GM12878 (cell line): ENCODE measurements at regions of chr10 and their contacts with region 1.

Region 1: DNA sequence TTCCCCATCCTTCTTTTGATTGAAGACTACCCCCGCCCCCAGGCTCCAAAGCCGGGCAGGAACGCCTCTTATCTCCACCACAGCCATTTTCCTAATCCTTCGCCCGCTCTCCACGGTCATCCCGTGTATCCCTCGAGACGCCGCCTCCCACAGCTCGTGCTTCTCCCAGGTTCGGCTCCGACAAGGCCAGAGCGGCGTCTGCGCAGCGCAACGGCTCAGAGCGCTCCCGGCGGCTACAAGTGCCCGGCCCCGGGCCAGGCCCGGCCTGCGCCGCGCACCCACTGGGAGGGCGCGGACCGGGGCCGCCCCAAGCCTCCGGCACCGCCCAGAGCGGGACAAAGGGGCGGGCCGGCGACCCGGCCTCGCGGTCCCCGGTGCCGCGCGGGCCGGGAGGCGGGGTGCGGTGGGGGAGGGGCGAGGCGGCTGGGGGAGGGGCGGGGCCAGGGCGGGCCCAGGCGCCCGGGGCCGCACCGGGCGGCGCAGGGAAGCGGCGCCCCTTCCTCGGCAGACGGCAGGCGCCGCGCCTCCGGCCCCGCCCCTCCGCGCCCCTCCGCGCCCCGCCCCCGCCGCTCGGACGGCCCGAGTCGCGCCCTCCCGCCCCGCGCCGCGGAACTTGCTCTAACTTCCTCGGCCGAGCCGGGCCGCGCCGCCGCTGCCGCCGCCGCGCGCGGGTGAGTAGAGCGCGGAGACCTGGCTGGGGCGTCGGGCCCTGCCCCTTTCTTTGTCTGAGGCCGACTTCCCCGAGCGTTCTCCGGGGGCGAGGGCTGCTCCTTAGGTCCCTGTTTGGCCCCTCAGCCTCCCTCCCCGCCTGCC is at the start of gene TSPAN14:
- DNase-seq: no peak
- ATAC-seq: peak; percentile 65
- H3K4me3 ChIP-seq: peak within 1 kb of the TSS; percentile 92
- H3K27ac ChIP-seq: peak within 1 kb of the TSS; percentile 67
- H3K4me1 ChIP-seq: peaks cover 46% of the 10 kb centered on the region
- H3K27me3 ChIP-seq: no peaks in the 10 kb centered on the region
- CTCF ChIP-seq: no peak
- EP300 ChIP-seq: no peak
- POLR2A ChIP-seq: peak; percentile 74
- RAD21 ChIP-seq: no peak
- polyA plus RNA-seq, gene TSPAN14: 2.5 to 2.6 TPM

Region 2: DNA sequence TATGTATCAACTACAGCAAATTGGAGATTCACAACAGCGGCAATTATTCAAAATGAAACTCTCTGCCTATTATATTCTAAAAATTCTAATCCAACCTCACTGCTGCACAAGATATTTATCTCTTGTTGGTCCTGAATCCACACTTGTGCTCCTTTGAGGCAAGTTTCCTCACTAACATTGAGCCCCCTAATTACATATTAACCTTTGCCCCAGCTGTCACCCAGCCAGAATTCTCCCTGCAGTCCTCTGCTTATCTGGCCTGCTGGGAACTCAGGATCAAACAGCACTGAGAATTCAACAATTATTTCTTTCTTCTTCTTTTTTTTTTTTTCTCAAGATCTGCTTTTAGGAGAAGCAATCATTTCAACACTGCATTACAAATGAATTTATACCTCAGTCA is 342.9 kb before region 1 on chr10:
- CTCF ChIA-PET with region 1: no interaction called
- POLR2A ChIA-PET with region 1: no interaction called
- RAD21 ChIA-PET with region 1: no interaction called
- SMC1A ChIA-PET with region 1: no interaction called
- in situ Hi-C with region 1: no loop called
- intact Hi-C with region 1: no loop called
- DNase-seq: no peak
- ATAC-seq: no peak
- H3K4me3 ChIP-seq: no peak overlapping the region
- H3K27ac ChIP-seq: no peak overlapping the region
- H3K4me1 ChIP-seq: no peaks in the 10 kb centered on the region; the same call in 1 of the 2 replicates
- H3K27me3 ChIP-seq: no peaks in the 10 kb centered on the region
- CTCF ChIP-seq: no peak
- EP300 ChIP-seq: no peak
- POLR2A ChIP-seq: no peak
- RAD21 ChIP-seq: no peak

Region 3: DNA sequence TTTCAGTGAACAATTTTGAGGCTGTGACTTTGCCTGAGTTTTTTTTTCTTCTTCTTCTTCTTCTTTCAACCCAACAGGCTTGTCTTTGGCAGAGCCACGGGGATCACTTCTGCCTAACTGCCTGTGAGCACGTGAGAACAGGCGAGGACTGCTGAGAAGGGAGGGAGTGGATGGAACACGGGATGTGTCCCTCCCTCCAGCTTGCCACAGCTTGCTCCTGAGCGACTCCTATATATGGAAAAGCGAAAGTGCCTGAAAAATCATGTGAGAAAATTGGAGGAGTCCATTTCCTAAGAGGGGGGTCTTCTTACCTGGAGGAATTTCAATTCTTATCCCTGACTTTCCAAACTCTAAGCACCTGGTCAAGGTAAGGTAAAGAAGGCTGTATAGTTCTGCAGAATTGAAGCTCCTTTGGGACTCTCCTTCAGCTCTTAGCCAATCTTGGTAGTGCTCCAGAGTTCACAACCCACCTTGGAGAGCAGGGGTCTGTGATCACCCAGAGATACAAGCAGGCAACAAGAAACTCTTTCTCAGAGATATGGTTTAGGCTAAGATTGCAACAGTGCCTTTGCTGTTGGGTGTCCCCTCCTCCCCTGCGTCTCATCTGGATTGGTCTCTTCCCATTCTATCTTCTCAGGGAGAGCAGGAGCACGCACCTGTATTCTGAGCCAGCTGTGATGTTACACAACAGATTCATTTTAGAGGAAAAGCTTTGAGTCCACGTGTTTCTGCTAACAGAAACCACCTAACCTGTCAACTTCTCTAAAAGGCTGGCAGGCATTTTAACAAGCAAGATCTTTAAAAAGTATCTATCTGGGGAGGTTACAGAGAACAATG is 164.2 kb before region 1 on chr10 and contains the start of gene MAT1A:
- CTCF ChIA-PET with region 1: no interaction called
- POLR2A ChIA-PET with region 1: no interaction called
- RAD21 ChIA-PET with region 1: no interaction called
- SMC1A ChIA-PET with region 1: no interaction called
- in situ Hi-C with region 1: no loop called
- intact Hi-C with region 1: no loop called
- DNase-seq: no peak
- ATAC-seq: no peak
- H3K4me3 ChIP-seq: no peak within 1 kb of the TSS
- H3K27ac ChIP-seq: no peak within 1 kb of the TSS
- H3K4me1 ChIP-seq: no peaks in the 10 kb centered on the region
- H3K27me3 ChIP-seq: peaks cover 0 to 6% of the 10 kb centered on the region in 2 experiments; a peak in 1 of 4 replicates
- CTCF ChIP-seq: no peak
- EP300 ChIP-seq: no peak
- POLR2A ChIP-seq: no peak
- RAD21 ChIP-seq: no peak
- polyA plus RNA-seq, gene MAT1A: not detected

Region 4: DNA sequence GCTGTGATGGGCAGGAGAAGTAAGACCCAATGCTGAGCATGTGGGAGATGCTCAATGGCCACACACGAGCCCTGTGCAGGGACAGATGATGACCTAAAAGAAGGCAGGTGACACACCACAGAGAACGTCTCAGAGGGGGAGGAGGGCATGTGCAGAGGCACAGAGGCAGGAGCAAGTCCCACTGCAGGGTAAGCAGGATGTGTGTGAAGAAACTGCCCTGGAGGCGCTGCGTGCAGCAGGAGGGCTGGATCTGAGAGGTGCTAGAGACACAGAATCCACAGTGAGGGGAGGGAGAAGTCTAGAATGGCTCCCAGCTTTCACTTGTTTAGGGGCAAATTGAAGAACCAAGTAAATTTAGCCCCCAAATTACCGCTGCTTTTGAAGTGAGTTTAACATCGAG is 82.4 kb before region 1 on chr10:
- CTCF ChIA-PET with region 1: no interaction called
- POLR2A ChIA-PET with region 1: no interaction called
- RAD21 ChIA-PET with region 1: no interaction called
- SMC1A ChIA-PET with region 1: no interaction called
- in situ Hi-C with region 1: no loop called
- intact Hi-C with region 1: no loop called
- DNase-seq: no peak
- ATAC-seq: no peak
- H3K4me3 ChIP-seq: no peak overlapping the region
- H3K27ac ChIP-seq: no peak overlapping the region
- H3K4me1 ChIP-seq: no peaks in the 10 kb centered on the region
- H3K27me3 ChIP-seq: no peaks in the 10 kb centered on the region
- CTCF ChIP-seq: no peak
- EP300 ChIP-seq: no peak
- POLR2A ChIP-seq: no peak
- RAD21 ChIP-seq: no peak

Region 5: GRCh38 chr10:80421707-80422536 is 32.0 kb before region 1 on chr10:
- CTCF ChIA-PET with region 1: interaction called, 7 read pairs
- POLR2A ChIA-PET with region 1: no interaction called
- RAD21 ChIA-PET with region 1: interaction called, 3 read pairs
- SMC1A ChIA-PET with region 1: interaction called, 11 read pairs
- in situ Hi-C with region 1: no loop called
- intact Hi-C with region 1: no loop called
- DNase-seq: peak; percentile 40
- ATAC-seq: peak; percentile 92
- H3K4me3 ChIP-seq: peak overlapping the region; percentile 23; the same call in 1 of the 2 replicates
- H3K27ac ChIP-seq: peak overlapping the region; percentile 47
- H3K4me1 ChIP-seq: peaks cover 21% of the 10 kb centered on the region
- H3K27me3 ChIP-seq: no peaks in the 10 kb centered on the region
- CTCF ChIP-seq: no peak
- EP300 ChIP-seq: no peak
- POLR2A ChIP-seq: no peak
- RAD21 ChIP-seq: no peak

Region 6: GRCh38 chr10:80429521-80429966 is 24.4 kb before region 1 on chr10:
- CTCF ChIA-PET with region 1: no interaction called
- POLR2A ChIA-PET with region 1: interaction called, 10 read pairs
- RAD21 ChIA-PET with region 1: no interaction called
- SMC1A ChIA-PET with region 1: no interaction called
- in situ Hi-C with region 1: no loop called
- intact Hi-C with region 1: no loop called
- DNase-seq: no peak
- ATAC-seq: no peak; the same call in 2 of the 3 replicates
- H3K4me3 ChIP-seq: no peak overlapping the region
- H3K27ac ChIP-seq: no peak overlapping the region
- H3K4me1 ChIP-seq: no peaks in the 10 kb centered on the region
- H3K27me3 ChIP-seq: no peaks in the 10 kb centered on the region
- CTCF ChIP-seq: no peak
- EP300 ChIP-seq: no peak
- POLR2A ChIP-seq: no peak
- RAD21 ChIP-seq: no peak

Region 7: GRCh38 chr10:80464557-80465450 is 10.9 kb after region 1 on chr10:
- CTCF ChIA-PET with region 1: interaction called, 76 read pairs
- POLR2A ChIA-PET with region 1: interaction called, 190 read pairs
- RAD21 ChIA-PET with region 1: interaction called, 122 read pairs
- SMC1A ChIA-PET with region 1: interaction called, 192 read pairs
- in situ Hi-C with region 1: no loop called
- intact Hi-C with region 1: no loop called
- DNase-seq: no peak
- ATAC-seq: peak; percentile 38
- H3K4me3 ChIP-seq: peak overlapping the region; percentile 42; the same call in 1 of the 2 replicates
- H3K27ac ChIP-seq: peak overlapping the region; percentile 47
- H3K4me1 ChIP-seq: peaks cover 76% of the 10 kb centered on the region
- H3K27me3 ChIP-seq: no peaks in the 10 kb centered on the region
- CTCF ChIP-seq: no peak
- EP300 ChIP-seq: no peak
- POLR2A ChIP-seq: no peak
- RAD21 ChIP-seq: no peak

Region 8: DNA sequence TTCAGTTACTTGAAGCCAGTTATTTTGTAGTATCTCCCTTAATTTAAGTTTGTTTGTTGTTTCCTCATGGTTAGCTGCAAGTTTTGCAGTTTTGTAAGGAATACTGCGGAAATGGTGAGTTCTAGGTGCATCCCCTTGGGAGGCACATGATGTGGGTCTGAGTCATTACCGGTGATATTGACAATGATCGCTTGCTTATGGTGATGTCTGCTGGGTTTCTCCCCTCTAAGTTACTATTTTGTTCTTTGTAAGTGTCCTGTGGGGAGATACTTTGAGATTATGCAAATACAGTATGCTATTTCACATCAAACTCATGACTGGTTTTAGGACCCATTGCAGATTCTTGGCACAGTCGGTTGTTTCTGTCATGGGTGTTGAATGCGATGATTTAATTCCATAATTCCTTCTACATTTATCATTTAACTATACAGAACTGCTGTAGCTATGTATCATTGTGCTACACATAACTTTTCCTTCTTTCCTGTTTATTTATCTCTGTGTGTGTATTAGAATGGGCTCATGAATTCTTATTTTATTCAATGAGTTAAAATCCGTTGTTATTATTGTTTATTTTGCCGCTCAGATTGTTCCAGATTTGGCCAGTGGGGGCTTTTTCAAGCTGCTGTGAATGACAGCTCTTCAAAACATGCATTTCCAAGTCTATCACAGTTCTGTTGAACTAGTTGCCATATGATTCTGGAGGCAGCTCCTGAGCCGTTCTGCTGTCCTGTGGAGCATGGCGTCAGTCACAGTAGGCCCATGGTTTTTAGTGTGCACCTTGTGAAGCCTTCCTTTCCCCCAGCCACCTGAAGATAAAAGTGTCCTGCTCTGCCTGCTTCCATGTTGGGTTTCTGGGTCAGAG is 18.6 kb after region 1 on chr10:
- CTCF ChIA-PET with region 1: interaction called, 76 read pairs
- POLR2A ChIA-PET with region 1: interaction called, 190 read pairs
- RAD21 ChIA-PET with region 1: interaction called, 122 read pairs
- SMC1A ChIA-PET with region 1: interaction called, 192 read pairs
- in situ Hi-C with region 1: no loop called
- intact Hi-C with region 1: loop called (anchors 1 kb)
- DNase-seq: peak; percentile 92
- ATAC-seq: peak; percentile 88
- H3K4me3 ChIP-seq: peak overlapping the region; percentile 35
- H3K27ac ChIP-seq: peak overlapping the region; percentile 87
- H3K4me1 ChIP-seq: peaks cover 65% of the 10 kb centered on the region
- H3K27me3 ChIP-seq: no peaks in the 10 kb centered on the region
- CTCF ChIP-seq: no peak
- EP300 ChIP-seq: peak; percentile 66 to 67; a peak in 2 of 4 replicates
- POLR2A ChIP-seq: no peak
- RAD21 ChIP-seq: no peak

Region 9: GRCh38 chr10:80498833-80499741 is 45.2 kb after region 1 on chr10:
- CTCF ChIA-PET with region 1: interaction called, 852 read pairs
- POLR2A ChIA-PET with region 1: interaction called, 60 read pairs
- RAD21 ChIA-PET with region 1: interaction called, 432 read pairs
- SMC1A ChIA-PET with region 1: interaction called, 1,038 read pairs
- in situ Hi-C with region 1: loop called (anchors 5 kb)
- intact Hi-C with region 1: loop called (anchors 5 kb)
- DNase-seq: no peak
- ATAC-seq: peak; percentile 34
- H3K4me3 ChIP-seq: no peak overlapping the region
- H3K27ac ChIP-seq: peak overlapping the region; percentile 39
- H3K4me1 ChIP-seq: peaks cover 45% of the 10 kb centered on the region
- H3K27me3 ChIP-seq: no peaks in the 10 kb centered on the region
- CTCF ChIP-seq: no peak
- EP300 ChIP-seq: no peak
- POLR2A ChIP-seq: 0 out of 2 replicates have a peak, but pooled peaks have one; percentile 15
- RAD21 ChIP-seq: no peak

Region 10: DNA sequence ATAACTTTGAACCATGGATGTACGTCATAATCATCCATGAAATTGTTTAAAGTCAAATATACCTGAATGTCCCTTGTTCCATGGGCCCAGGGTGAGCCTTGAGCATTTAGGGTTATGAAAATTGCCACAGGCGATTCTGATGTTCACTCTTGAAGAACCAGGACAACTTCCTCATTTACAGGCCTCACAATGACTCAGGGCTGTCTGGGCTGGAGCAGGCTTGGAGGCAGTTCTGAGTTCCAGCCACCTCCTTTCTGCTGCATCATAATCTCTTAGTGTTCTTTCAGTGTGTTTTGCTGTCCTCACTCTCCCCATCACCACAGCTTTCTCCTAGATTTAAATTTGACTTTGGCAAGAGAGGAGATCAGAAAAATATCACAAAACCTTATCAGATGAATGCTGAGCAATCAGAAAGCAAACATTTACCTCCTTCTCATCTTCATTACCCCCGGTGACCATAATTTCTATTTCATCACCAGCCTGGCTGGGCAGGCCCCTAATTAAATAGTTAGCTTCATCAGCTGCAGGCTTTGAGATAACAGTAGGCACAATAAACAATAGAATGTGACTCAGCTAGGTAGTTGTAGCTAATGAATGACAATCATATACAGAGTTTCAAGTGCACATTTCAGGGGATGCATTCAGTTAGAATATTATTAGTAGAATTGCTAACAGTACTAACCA is 654.8 kb after region 1 on chr10:
- CTCF ChIA-PET with region 1: no interaction called
- POLR2A ChIA-PET with region 1: no interaction called
- RAD21 ChIA-PET with region 1: no interaction called
- SMC1A ChIA-PET with region 1: interaction called, 3 read pairs
- in situ Hi-C with region 1: no loop called
- intact Hi-C with region 1: loop called (anchors 10 kb)
- DNase-seq: peak; percentile 46
- ATAC-seq: peak; percentile 90
- H3K4me3 ChIP-seq: no peak overlapping the region
- H3K27ac ChIP-seq: peak overlapping the region; percentile 1; the same call in 1 of the 2 replicates
- H3K4me1 ChIP-seq: no peaks in the 10 kb centered on the region
- H3K27me3 ChIP-seq: no peaks in the 10 kb centered on the region
- CTCF ChIP-seq: no peak
- EP300 ChIP-seq: peak; percentile 66 to 83; a peak in 3 of 4 replicates
- POLR2A ChIP-seq: no peak
- RAD21 ChIP-seq: no peak